Activated CD8-positive, alpha-beta T cell treated with anti-CD3 and anti-CD28 coated beads for 36 hours (primary cell): ENCODE measurements at regions of chr22 and their contacts with region 1.

Region 1: DNA sequence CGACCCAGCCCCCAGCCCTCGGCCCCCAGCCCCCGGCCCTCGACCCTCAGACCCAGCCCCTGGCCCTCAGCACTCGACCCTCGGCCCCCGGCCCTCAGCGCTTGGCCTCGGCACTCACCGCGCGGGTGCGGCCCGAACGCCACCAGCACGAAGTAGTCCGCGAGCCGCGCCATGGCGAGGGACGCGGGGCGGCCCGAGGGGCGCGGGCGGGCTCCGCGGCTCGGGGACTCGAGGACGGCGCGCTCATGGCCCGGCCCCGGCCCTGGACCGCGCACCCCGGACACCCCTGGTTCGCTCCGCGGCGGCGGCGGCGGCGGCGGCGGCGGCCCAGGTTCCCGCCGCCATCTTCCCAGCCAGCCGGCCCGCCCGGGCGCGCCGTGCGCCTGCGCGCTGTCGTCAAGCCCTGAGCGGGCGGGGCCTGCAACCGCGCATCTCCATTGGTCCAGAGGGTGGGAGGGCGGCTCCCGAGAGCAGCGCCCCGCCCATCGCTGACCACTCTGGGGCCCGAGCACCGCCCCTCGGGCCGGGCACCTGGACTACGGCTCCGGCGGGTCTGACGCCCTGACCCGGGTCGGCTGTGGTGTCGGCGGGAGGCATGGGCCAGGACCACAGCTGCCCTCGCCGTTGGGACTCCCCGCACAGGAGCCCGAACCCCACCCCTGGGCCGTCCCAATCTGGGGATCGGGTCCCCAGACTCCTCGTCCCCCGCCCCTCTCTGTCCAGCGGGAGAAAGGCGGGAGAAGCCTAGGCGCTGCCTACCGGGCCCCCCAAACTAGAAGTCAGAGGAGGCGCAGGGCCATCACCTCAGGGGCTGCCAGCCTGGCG is at the start of gene SBF1:
- DNase-seq: peak; percentile 91
- ATAC-seq: peak; percentile 76
- H3K4me3 Mint-ChIP-seq: peak within 1 kb of the TSS; percentile 99
- H3K27ac Mint-ChIP-seq: peak within 1 kb of the TSS; percentile 95
- H3K4me1 Mint-ChIP-seq: peaks cover 46% of the 10 kb centered on the region
- H3K27me3 Mint-ChIP-seq: peaks cover 1% of the 10 kb centered on the region
- CTCF ChIP-seq: no peak
- total RNA-seq, gene SBF1: 120 TPM

Region 2: GRCh38 chr22:50408311-50408710 is 66.6 kb before region 1 on chr22:
- CTCF ChIA-PET with region 1: no interaction called
- POLR2A ChIA-PET with region 1: no interaction called
- intact Hi-C with region 1: no loop called
- DNase-seq: no peak
- ATAC-seq: no peak
- H3K4me3 Mint-ChIP-seq: no peak overlapping the region
- H3K27ac Mint-ChIP-seq: no peak overlapping the region
- H3K4me1 Mint-ChIP-seq: peaks cover 3% of the 10 kb centered on the region
- H3K27me3 Mint-ChIP-seq: no peaks in the 10 kb centered on the region
- CTCF ChIP-seq: no peak

Region 3: DNA sequence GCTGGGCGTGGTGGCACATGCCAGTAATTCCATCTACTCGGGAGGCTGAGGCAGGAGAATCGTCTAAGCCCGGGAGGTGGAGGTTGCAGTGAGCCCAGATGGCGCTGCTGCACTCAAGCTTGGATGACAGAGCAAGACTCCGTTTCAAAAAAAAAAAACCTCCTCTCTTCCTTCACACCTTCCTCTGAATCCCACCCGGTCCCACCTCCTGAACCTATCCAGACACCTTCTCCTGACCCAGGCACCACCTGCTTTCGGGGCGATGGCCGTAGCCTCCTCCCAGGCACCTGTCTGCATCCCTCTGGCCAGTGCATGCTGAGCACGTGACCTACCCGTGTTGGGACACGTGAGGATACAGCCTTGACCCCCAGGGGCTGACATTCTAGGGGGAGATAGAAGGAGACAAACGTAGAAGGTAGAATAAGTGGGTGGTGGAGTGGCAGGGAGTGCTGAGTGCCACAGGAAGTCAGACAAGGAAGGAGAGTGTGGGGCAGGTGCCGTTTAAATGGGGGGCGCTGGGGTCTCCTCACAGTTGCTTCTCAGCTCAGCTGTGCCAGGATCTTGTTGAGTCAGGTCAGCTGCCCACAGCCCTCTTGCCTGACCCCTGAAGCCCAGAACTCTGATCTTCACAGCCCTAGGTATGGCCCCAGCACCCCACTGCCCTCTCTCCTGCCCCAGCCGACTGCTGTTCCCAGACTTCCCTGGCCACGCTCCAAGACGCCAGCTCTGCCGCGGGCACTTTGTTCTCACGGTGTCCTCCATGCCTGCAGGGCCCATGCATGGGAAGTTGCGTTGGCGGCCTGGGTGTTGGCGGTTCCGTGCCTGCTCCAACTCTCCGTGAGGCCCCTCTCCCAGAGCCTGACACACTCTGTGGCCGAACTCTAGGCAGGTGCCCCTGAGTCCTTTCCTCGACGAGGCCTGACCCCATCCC is 10.6 kb after region 1 on chr22:
- CTCF ChIA-PET with region 1: interaction called, 3 read pairs
- POLR2A ChIA-PET with region 1: interaction called, 11 read pairs
- intact Hi-C with region 1: no loop called
- DNase-seq: no peak
- ATAC-seq: no peak
- H3K4me3 Mint-ChIP-seq: no peak overlapping the region
- H3K27ac Mint-ChIP-seq: no peak overlapping the region
- H3K4me1 Mint-ChIP-seq: no peaks in the 10 kb centered on the region
- H3K27me3 Mint-ChIP-seq: no peaks in the 10 kb centered on the region
- CTCF ChIP-seq: no peak

Region 4: GRCh38 chr22:50498322-50498890 is 23.5 kb after region 1 on chr22:
- CTCF ChIA-PET with region 1: interaction called, 13 read pairs
- POLR2A ChIA-PET with region 1: interaction called, 5 read pairs
- intact Hi-C with region 1: no loop called
- DNase-seq: peak; percentile 80
- ATAC-seq: peak; percentile 95
- H3K4me3 Mint-ChIP-seq: no peak overlapping the region
- H3K27ac Mint-ChIP-seq: no peak overlapping the region
- H3K4me1 Mint-ChIP-seq: no peaks in the 10 kb centered on the region
- H3K27me3 Mint-ChIP-seq: no peaks in the 10 kb centered on the region
- CTCF ChIP-seq: peak; percentile 79

Region 5: GRCh38 chr22:50582562-50583293 is 107.8 kb after region 1 on chr22 and contains the start of gene CHKB:
- CTCF ChIA-PET with region 1: no interaction called
- POLR2A ChIA-PET with region 1: no interaction called
- intact Hi-C with region 1: no loop called
- DNase-seq: peak; percentile 99
- ATAC-seq: peak; percentile 97
- H3K4me3 Mint-ChIP-seq: peak within 1 kb of the TSS; percentile 92
- H3K27ac Mint-ChIP-seq: peak within 1 kb of the TSS; percentile 89
- H3K4me1 Mint-ChIP-seq: peaks cover 24% of the 10 kb centered on the region
- H3K27me3 Mint-ChIP-seq: no peaks in the 10 kb centered on the region
- CTCF ChIP-seq: no peak
- total RNA-seq, gene CHKB: 55.6 to 60.3 TPM